Heart right ventricle (tissue), 16 donors: ENCODE measurements at regions of chr11 and their contacts with region 1.

Region 1: DNA sequence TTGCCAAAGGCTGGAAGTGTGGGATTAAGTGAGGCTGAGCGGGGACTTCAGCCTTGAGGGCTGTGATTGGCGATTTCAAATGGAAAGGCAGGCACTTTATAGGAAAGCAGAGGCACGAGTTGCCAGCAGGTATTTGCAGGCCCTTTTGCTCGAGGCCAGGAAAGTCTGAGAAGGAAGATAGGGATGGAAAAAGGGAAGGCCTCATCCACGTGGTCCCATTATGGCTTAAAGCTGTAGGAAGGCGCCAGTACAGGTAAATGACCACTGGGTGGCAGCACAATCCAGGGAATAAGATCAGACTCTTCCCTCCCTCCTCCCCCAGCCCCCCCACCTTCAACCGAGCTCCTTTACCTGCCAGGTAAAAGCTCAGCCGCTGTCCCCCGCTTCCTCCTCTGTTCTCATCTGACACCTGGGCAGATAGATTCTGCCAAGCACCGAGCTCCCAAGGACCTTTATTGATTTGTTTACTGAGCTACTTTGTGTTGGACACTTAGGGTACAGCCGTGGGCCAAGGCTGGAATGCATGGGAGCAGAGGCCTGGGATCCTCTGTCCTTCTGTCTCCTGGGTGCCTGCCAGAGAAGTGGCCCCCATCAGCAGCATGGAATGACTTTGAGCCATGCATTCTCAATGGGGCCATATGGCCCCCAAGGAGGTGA is 7.5 kb downstream of the P2RX3 start:
- DNase-seq: peak; percentile 42 to 74
- ATAC-seq: peak in 7 of 8 donors; percentile 49 to 75 (median 73)
- H3K4me3 ChIP-seq: no peak overlapping the region
- H3K27ac ChIP-seq: no peak overlapping the region
- H3K4me1 ChIP-seq: peaks cover 0 to 9% (median 4%) of the 10 kb centered on the region in 9 donors
- H3K27me3 ChIP-seq: peaks cover 0 to 7% (median 0%) of the 10 kb centered on the region in 7 donors
- CTCF ChIP-seq: peak; percentile 67 to 90 (median 87)

Region 2: GRCh38 chr11:57311109-57311936 is 34.4 kb before region 1 on chr11:
- intact Hi-C with region 1: no loop called
- DNase-seq: peak; percentile 90
- ATAC-seq: peak; percentile 89 to 97 (median 94)
- H3K4me3 ChIP-seq: peak overlapping the region; percentile 41 to 68 (median 56)
- H3K27ac ChIP-seq: peak overlapping the region; percentile 69 to 91 (median 82)
- H3K4me1 ChIP-seq: peaks cover 21 to 99% (median 78%) of the 10 kb centered on the region in 9 donors
- H3K27me3 ChIP-seq: no peaks in the 10 kb centered on the region
- CTCF ChIP-seq: no peak

Region 3: GRCh38 chr11:57426929-57427726 is 81.4 kb after region 1 on chr11 and contains the start of gene SLC43A3:
- intact Hi-C with region 1: loop called in 2 of 10 experiments (anchors 5 kb)
- DNase-seq: peak; percentile 77 to 83
- ATAC-seq: peak; percentile 65 to 80 (median 74)
- H3K4me3 ChIP-seq: peak within 1 kb of the TSS; percentile 27 to 72 (median 63)
- H3K27ac ChIP-seq: peak within 1 kb of the TSS; percentile 66 to 97 (median 95)
- H3K4me1 ChIP-seq: peaks cover 32 to 80% (median 58%) of the 10 kb centered on the region in 9 donors
- H3K27me3 ChIP-seq: no peaks in the 10 kb centered on the region
- CTCF ChIP-seq: peak in 1 of 9 donors; percentile 6
- total RNA-seq, gene SLC43A3: 12.1 to 36.2 (median 19.8) TPM

Region 4: GRCh38 chr11:57480409-57481137 is 134.9 kb after region 1 on chr11:
- intact Hi-C with region 1: loop called in 9 of 10 experiments (anchors 1 to 10 kb)
- DNase-seq: peak; percentile 67 to 71
- ATAC-seq: peak in 5 of 8 donors; percentile 30 to 64 (median 43)
- H3K4me3 ChIP-seq: no peak overlapping the region
- H3K27ac ChIP-seq: no peak overlapping the region
- H3K4me1 ChIP-seq: peaks cover 11 to 42% (median 31%) of the 10 kb centered on the region in 9 donors
- H3K27me3 ChIP-seq: peaks cover 0 to 46% (median 24%) of the 10 kb centered on the region in 7 donors
- CTCF ChIP-seq: peak; percentile 49 to 81 (median 73)

Region 5: GRCh38 chr11:57644748-57645688 is 299.3 kb after region 1 on chr11:
- intact Hi-C with region 1: loop called (anchors 2 to 10 kb)
- DNase-seq: peak; percentile 76 to 86
- ATAC-seq: peak; percentile 75 to 81 (median 77)
- H3K4me3 ChIP-seq: no peak overlapping the region
- H3K27ac ChIP-seq: peak overlapping the region in 9 of 10 donors; percentile 11 to 68 (median 47)
- H3K4me1 ChIP-seq: peaks cover 3 to 80% (median 56%) of the 10 kb centered on the region in 9 donors
- H3K27me3 ChIP-seq: peaks cover 0 to 55% (median 37%) of the 10 kb centered on the region in 7 donors
- CTCF ChIP-seq: peak; percentile 72 to 92 (median 88)